T-cell (primary cell): ENCODE measurements at regions of chr11 and their contacts with region 1.

Region 1: DNA sequence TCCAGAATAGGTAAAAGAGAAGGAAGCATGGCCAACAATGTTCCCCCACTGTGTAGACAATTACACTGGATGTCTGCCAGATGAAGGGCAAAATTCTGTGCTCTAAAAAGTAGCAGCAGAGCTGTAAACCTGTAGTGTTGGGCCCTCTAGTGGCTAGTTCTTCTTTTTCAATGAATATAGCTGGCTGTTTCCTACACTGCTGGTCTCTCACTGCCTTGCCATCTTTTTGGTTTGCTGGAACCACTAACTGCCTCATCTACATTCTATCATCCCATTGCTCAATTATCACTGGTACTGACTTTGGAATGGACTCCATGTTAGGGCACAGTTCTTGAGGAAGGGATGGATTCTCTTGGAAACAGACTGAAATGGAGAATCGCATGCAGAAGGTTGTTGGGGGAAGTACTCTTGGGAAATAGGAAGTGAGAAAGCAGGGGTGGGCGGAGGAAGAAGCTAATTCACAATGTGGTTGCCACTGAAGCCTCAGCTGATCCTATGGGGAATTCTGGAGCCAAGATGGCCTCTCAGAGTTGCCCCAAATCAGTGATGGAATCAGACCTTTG is 17.9 kb downstream of the KCNE3 start:
- DNase-seq: peak in 30 of 35 experiments; percentile 2 to 81 (median 24)
- ATAC-seq: peak; percentile 72 to 94 (median 84)
- H3K4me3 ChIP-seq: no peak overlapping the region
- H3K4me3 Mint-ChIP-seq: no peak overlapping the region
- H3K27ac ChIP-seq: no peak overlapping the region
- H3K27ac Mint-ChIP-seq: no peak overlapping the region
- H3K4me1 ChIP-seq: peaks cover 0 to 5% of the 10 kb centered on the region in 2 experiments
- H3K4me1 Mint-ChIP-seq: peaks cover 2 to 6% (median 2%) of the 10 kb centered on the region in 3 donors
- H3K27me3 ChIP-seq: peaks cover 0 to 17% of the 10 kb centered on the region in 2 experiments
- H3K27me3 Mint-ChIP-seq: peaks cover 3 to 10% of the 10 kb centered on the region in 2 donors

Region 2: GRCh38 chr11:74255741-74256369 is 193.6 kb before region 1 on chr11:
- CTCF ChIA-PET with region 1: interaction called, 3 to 21 read pairs
- POLR2A ChIA-PET with region 1: no interaction called
- DNase-seq: peak in 34 of 35 experiments; percentile 15 to 78 (median 42)
- ATAC-seq: peak; percentile 69 to 80 (median 77)
- H3K4me3 ChIP-seq: no peak overlapping the region
- H3K4me3 Mint-ChIP-seq: no peak overlapping the region
- H3K27ac ChIP-seq: no peak overlapping the region
- H3K27ac Mint-ChIP-seq: no peak overlapping the region
- H3K4me1 ChIP-seq: no peaks in the 10 kb centered on the region
- H3K4me1 Mint-ChIP-seq: peaks cover 6 to 8% (median 7%) of the 10 kb centered on the region in 3 donors
- H3K27me3 ChIP-seq: peaks cover 0 to 2% of the 10 kb centered on the region in 2 experiments
- H3K27me3 Mint-ChIP-seq: no peaks in the 10 kb centered on the region

Region 3: GRCh38 chr11:74388678-74389327 is 60.6 kb before region 1 on chr11:
- CTCF ChIA-PET with region 1: interaction called, 14 to 135 read pairs
- POLR2A ChIA-PET with region 1: interaction called, 4 to 9 read pairs
- DNase-seq: peak in 32 of 35 experiments; percentile 9 to 82 (median 59)
- ATAC-seq: peak; percentile 82 to 95 (median 92)
- H3K4me3 ChIP-seq: no peak overlapping the region
- H3K4me3 Mint-ChIP-seq: no peak overlapping the region
- H3K27ac ChIP-seq: no peak overlapping the region
- H3K27ac Mint-ChIP-seq: peak overlapping the region; percentile 55 to 80
- H3K4me1 ChIP-seq: peaks cover 5 to 7% of the 10 kb centered on the region in 2 experiments
- H3K4me1 Mint-ChIP-seq: peaks cover 28 to 35% (median 32%) of the 10 kb centered on the region in 3 donors
- H3K27me3 ChIP-seq: no peaks in the 10 kb centered on the region
- H3K27me3 Mint-ChIP-seq: no peaks in the 10 kb centered on the region

Region 4: DNA sequence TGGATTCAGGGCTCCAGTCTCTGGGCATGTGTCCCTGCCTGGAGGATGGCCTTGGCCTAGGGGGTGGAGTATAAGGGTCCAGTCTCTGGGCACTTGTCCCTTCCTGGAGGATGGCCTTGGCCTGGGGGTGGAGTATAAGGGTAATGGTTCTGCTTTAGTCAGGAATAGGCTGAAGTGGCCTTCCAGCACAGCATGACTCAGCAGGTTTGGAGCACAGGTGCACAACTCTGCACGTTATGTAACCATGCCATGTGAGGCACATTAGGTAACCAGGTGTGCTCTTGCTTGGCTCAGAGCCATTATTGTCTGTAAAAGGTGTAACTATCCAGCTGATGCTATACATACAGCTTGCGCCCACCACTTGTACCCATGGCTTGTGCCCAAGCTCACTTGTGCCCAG is 94.5 kb after region 1 on chr11:
- CTCF ChIA-PET with region 1: no interaction called
- POLR2A ChIA-PET with region 1: no interaction called
- DNase-seq: no peak
- ATAC-seq: no peak
- H3K4me3 ChIP-seq: no peak overlapping the region
- H3K4me3 Mint-ChIP-seq: no peak overlapping the region
- H3K27ac ChIP-seq: no peak overlapping the region
- H3K27ac Mint-ChIP-seq: no peak overlapping the region
- H3K4me1 ChIP-seq: no peaks in the 10 kb centered on the region
- H3K4me1 Mint-ChIP-seq: no peaks in the 10 kb centered on the region
- H3K27me3 ChIP-seq: peaks cover 0 to 8% of the 10 kb centered on the region in 2 experiments
- H3K27me3 Mint-ChIP-seq: peaks cover 6 to 12% of the 10 kb centered on the region in 2 donors

Region 5: DNA sequence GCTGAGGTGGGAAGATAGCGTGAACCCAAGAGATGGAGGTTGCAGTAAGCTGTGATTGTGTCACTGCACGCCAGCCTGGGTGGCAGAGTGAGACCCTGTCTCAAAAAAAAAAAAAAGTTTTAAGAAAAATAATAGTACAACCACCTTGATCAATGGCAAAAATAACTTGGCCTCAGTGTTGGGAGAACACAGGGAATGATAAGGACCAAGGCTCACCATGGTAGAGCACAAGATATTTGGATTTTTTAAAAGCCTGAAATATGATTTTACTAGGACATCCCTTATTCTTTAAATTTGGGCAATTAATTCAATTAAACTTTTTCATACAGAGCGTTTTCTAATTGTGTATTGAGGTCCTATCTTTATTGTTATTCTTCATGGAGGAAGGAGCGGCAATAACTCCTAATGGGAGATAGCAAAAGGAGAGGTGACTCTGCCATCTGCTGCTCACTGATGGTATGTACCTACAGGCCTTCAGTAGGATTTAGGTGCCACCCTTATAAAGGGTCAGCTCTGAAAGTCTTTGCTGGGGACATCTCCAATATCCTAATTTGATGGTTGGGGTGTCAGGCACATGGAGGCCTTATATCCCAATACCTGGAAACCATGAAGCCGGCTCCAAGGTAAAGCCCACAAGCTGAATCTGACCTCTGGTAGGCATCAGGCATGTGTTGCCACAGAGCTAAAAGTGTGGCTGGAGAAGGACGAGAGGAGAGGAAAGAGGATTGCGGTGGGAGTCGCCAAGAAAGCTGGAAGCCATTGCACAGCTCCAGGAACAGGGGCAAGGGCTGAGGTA is 121.0 kb after region 1 on chr11:
- CTCF ChIA-PET with region 1: interaction called, 4 to 15 read pairs
- POLR2A ChIA-PET with region 1: no interaction called
- DNase-seq: peak in 6 of 35 experiments; percentile 2 to 49 (median 8)
- ATAC-seq: no peak
- H3K4me3 ChIP-seq: no peak overlapping the region
- H3K4me3 Mint-ChIP-seq: no peak overlapping the region
- H3K27ac ChIP-seq: no peak overlapping the region
- H3K27ac Mint-ChIP-seq: no peak overlapping the region
- H3K4me1 ChIP-seq: no peaks in the 10 kb centered on the region
- H3K4me1 Mint-ChIP-seq: no peaks in the 10 kb centered on the region
- H3K27me3 ChIP-seq: peaks cover 0 to 9% of the 10 kb centered on the region in 2 experiments
- H3K27me3 Mint-ChIP-seq: peaks cover 6 to 10% of the 10 kb centered on the region in 2 donors

Region 6: DNA sequence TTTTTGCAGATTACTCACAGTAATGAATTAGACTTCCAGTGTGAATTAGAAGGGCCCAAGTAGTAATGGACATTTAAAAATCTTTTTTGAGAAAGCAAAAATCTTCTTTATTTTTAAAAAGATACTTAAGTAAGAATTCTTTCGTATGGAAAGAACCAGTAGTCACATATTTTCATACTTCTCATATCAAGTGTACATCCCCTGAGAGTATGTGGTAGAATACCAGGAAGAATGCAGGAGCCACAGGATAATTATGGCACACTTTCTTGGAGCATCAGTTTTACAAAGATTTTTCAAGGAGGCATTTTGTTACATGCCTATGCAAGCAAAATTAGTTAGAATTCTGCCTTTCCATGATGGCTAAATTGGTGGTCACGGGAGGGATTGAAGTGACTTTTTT is 171.1 kb after region 1 on chr11:
- CTCF ChIA-PET with region 1: no interaction called
- POLR2A ChIA-PET with region 1: no interaction called
- DNase-seq: no peak
- ATAC-seq: no peak
- H3K4me3 ChIP-seq: no peak overlapping the region
- H3K4me3 Mint-ChIP-seq: no peak overlapping the region
- H3K27ac ChIP-seq: no peak overlapping the region
- H3K27ac Mint-ChIP-seq: no peak overlapping the region
- H3K4me1 ChIP-seq: no peaks in the 10 kb centered on the region
- H3K4me1 Mint-ChIP-seq: no peaks in the 10 kb centered on the region
- H3K27me3 ChIP-seq: no peaks in the 10 kb centered on the region
- H3K27me3 Mint-ChIP-seq: no peaks in the 10 kb centered on the region